ENCODE measurements at regions of chr11 and their contacts with region 1.

Region 1: DNA sequence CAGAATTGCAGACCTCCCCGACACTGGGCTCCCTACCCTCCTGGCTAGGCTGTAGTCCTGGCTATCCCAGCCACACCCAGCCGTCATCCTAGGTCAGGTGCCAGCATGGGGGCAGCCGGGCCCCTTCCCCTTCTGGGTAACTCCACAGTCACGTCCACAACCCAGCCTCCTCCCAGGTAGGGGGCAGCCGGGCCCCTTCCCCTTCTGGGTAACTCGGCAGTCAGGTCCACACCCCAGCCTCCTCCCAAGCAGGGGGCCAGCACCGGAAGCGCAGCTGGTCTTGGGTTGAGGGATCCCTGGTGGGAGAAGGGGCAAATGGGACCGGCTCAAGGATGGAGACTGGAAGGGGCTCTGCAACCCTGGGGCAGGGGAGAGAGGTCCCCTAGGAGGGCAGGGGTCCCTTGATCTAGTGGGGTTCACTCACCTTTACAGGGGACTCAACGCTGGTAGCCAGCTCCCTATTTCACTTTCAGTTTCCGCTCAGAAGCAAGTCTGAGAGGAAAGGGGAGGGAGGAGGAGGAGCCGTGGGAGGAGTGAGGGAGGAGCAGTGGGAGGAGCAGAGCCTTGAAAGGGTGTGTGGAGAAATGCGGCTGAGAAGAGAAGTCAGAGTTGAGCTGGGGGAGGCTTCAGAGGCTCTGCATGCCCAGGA is at the start of gene TRIM21:
- DNase-seq: peak; percentile 87
- H3K4me3 Mint-ChIP-seq: peak within 1 kb of the TSS; percentile 90
- H3K27ac Mint-ChIP-seq: peak within 1 kb of the TSS; percentile 85
- H3K4me1 Mint-ChIP-seq: peaks cover 25% of the 10 kb centered on the region
- H3K27me3 Mint-ChIP-seq: no peaks in the 10 kb centered on the region
- total RNA-seq, gene TRIM21: 31.9 and 34.9 TPM in 2 replicates

Region 2: GRCh38 chr11:4480574-4481566 is 87.5 kb after region 1 on chr11:
- intact Hi-C with region 1: loop called (anchors 1 kb)
- DNase-seq: no peak
- H3K4me3 Mint-ChIP-seq: no peak overlapping the region
- H3K27ac Mint-ChIP-seq: no peak overlapping the region
- H3K4me1 Mint-ChIP-seq: peaks cover 5% of the 10 kb centered on the region
- H3K27me3 Mint-ChIP-seq: peaks cover 8% of the 10 kb centered on the region

Region 3: GRCh38 chr11:4493480-4493818 is 100.1 kb after region 1 on chr11:
- intact Hi-C with region 1: loop called (anchors 2 kb)
- DNase-seq: no peak
- H3K4me3 Mint-ChIP-seq: no peak overlapping the region
- H3K27ac Mint-ChIP-seq: no peak overlapping the region
- H3K4me1 Mint-ChIP-seq: peaks cover 6% of the 10 kb centered on the region
- H3K27me3 Mint-ChIP-seq: peaks cover 16% of the 10 kb centered on the region

Region 4: GRCh38 chr11:4740735-4741134 is 347.4 kb after region 1 on chr11:
- intact Hi-C with region 1: no loop called
- DNase-seq: no peak
- H3K4me3 Mint-ChIP-seq: no peak overlapping the region
- H3K27ac Mint-ChIP-seq: no peak overlapping the region
- H3K4me1 Mint-ChIP-seq: no peaks in the 10 kb centered on the region
- H3K27me3 Mint-ChIP-seq: no peaks in the 10 kb centered on the region